Activated CD4-positive, alpha-beta T cell treated with anti-CD3 and anti-CD28 coated beads, Interleukin-2, amount 10 ng/mL, durations not matched to agents 24 days and 14 days (primary cell): ENCODE measurements at regions of chr9 and their contacts with region 1.

Region 1: DNA sequence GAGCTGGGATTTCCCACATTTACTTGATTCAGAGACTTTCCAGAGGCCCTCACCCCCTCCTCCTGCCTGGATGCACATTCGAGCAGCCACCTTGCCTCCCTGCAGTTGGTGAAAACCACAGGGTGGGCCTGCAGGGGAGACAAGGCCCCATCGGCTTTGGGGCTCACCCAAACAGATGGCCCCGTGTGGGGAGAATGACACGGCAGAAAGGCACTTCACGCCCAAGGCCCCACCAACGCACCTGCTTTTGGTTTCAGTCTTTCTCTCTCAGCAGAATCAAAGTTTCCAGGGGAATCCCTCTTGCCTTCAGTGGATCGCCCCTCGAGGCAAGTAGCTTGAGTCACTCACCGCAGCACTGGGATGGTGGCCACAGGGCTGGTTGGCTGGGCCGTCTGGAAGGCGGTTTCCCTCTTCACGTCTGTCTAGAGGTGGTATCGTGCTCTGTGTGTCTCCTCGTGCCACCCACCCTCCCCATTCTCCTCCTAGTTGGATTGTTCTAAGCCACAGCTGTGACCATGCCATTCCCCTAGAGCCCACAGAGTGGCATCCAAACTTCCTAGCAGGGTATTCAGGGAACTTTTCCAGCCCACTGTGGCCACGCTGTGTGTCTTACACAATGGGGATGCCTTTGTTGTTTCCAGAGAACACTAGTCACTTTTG is 31.8 kb downstream of the SEC61B start:
- DNase-seq: peak; percentile 93
- H3K4me3 Mint-ChIP-seq: peak overlapping the region; percentile 70
- H3K27ac Mint-ChIP-seq: peak overlapping the region; percentile 97
- H3K4me1 Mint-ChIP-seq: peaks cover 50% of the 10 kb centered on the region
- H3K27me3 Mint-ChIP-seq: no peaks in the 10 kb centered on the region

Region 2: DNA sequence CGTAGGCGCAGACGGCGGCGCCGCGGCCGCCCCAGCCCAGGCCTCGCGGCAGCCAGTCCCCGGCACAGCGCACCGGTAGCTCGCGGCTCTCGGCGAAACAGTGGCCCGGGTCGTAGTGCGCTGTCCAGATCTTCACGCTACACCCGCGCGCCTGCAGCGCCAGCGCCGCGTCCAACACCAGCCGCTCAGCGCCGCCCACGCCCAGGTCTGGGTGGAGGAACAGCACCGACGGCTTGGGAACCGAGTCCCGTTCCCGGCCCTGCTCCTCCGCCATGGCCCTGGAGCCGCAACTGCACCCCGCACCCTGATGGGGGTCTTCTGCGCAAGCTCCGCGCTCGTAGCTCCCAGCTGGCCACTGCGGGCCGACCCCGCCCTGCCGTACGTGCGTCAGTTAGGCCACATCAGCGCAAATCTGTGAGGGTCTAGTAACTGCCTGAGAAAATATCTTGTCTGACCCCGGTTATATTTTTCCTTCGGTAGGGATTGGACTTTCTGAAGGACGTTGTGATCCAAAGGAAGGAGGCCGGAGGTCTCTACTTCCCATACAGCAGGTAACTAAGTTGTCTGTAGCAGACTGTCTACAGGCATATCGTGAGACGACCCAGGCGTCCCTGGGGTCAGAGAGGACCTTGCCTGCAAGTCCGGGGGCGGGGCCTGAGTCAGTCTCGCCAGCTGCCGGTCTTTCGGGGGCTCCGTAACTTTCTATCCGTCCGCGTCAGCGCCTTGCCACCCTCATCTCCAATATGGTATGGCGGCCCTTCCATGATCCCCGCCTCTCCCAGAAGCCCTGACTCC is 32.1 kb before region 1 on chr9 and contains the starts of genes ALG2 and SEC61B:
- intact Hi-C with region 1: loop called (anchors 1 kb)
- DNase-seq: peak; percentile 98
- H3K4me3 Mint-ChIP-seq: peak within 1 kb of the TSS; percentile 97
- H3K27ac Mint-ChIP-seq: peak within 1 kb of the TSS; percentile 99
- H3K4me1 Mint-ChIP-seq: peaks cover 51% of the 10 kb centered on the region
- H3K27me3 Mint-ChIP-seq: no peaks in the 10 kb centered on the region
- total RNA-seq, gene ALG2: 29.2 and 31.0 TPM in 2 replicates
- total RNA-seq, gene SEC61B: 169 and 170 TPM in 2 replicates

Region 3: GRCh38 chr9:99231711-99232110 is 22.2 kb before region 1 on chr9:
- intact Hi-C with region 1: loop called (anchors 1 kb)
- DNase-seq: peak; percentile 78
- H3K4me3 Mint-ChIP-seq: no peak overlapping the region
- H3K27ac Mint-ChIP-seq: no peak overlapping the region
- H3K4me1 Mint-ChIP-seq: peaks cover 19% of the 10 kb centered on the region
- H3K27me3 Mint-ChIP-seq: no peaks in the 10 kb centered on the region

Region 4: DNA sequence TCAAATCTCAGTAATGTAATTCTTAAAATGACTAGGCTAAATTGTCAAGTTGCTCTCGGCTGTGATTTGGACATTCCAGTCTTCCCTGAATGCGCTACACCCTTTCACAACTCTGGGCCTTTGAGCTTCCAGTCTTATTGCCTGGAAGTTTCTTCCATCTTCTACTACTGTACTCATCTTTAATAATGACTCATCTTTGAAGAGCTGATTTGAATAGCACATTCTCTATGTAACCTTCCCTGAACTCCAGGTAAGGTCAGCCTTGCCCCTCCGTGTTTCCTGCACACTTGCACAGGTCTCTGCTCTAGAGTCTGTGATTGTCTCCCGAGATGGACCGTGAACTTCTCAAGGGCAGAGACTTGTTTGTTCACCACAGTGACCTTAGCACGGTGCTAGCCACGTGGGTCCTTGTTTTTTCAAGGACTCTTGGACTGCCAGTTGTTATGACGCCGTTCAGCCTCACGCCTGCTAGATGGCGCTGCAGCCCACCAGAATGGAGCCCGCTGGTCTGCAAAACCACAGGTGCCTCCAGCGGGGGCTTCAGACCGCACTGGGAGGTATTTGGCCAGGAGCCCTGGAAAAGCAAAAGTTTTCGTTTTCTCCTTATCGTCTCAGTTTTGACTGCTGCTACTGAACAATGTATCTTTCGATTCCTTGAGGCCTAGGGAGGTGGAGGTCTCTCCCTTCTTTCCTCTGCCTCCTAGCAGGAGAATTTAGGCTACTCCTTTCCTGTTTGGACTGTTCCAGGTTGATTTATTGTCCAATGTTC is 12.5 kb after region 1 on chr9:
- intact Hi-C with region 1: loop called (anchors 1 kb)
- DNase-seq: peak; percentile 88
- H3K4me3 Mint-ChIP-seq: peak overlapping the region; percentile 61
- H3K27ac Mint-ChIP-seq: peak overlapping the region; percentile 55
- H3K4me1 Mint-ChIP-seq: peaks cover 26% of the 10 kb centered on the region
- H3K27me3 Mint-ChIP-seq: peaks cover 13% of the 10 kb centered on the region